CD4-positive, alpha-beta T cell (primary cell): ENCODE measurements at regions of chr9 and their contacts with region 1.

Region 1: DNA sequence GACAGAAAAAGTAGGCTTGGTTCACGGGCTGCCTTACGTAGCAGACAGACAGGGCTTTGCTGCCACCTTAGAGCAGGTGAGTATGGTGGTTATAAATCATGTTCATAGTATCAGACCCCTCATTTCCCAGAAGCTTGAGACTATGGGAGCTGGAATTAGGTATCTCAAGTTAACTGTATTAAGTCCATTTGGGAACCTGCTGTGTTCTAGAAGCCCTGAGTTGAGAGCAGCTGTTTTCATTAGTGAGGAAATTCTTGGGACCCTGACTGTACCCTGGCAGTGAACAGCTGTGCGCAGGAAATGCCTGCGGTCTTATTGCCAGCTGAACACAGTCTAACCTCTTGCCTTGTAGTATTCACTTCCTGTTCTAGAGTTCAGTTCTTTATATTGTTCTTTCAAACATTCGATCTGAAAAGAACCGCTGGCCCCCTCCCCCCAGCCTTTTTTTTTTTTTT is 29.8 kb downstream of the UGCG start:
- DNase-seq: peak; percentile 29 to 89 (median 52)
- ATAC-seq: peak; percentile 95
- H3K4me3 ChIP-seq: no peak overlapping the region
- H3K4me3 Mint-ChIP-seq: peak overlapping the region; percentile 82
- H3K27ac ChIP-seq: peak overlapping the region in 1 of 2 donors; percentile 46
- H3K27ac Mint-ChIP-seq: peak overlapping the region; percentile 87
- H3K4me1 ChIP-seq: peaks cover 27% of the 10 kb centered on the region
- H3K4me1 Mint-ChIP-seq: peaks cover 57% of the 10 kb centered on the region
- H3K27me3 ChIP-seq: no peaks in the 10 kb centered on the region
- H3K27me3 Mint-ChIP-seq: no peaks in the 10 kb centered on the region
- CTCF ChIP-seq: no peak

Region 2: DNA sequence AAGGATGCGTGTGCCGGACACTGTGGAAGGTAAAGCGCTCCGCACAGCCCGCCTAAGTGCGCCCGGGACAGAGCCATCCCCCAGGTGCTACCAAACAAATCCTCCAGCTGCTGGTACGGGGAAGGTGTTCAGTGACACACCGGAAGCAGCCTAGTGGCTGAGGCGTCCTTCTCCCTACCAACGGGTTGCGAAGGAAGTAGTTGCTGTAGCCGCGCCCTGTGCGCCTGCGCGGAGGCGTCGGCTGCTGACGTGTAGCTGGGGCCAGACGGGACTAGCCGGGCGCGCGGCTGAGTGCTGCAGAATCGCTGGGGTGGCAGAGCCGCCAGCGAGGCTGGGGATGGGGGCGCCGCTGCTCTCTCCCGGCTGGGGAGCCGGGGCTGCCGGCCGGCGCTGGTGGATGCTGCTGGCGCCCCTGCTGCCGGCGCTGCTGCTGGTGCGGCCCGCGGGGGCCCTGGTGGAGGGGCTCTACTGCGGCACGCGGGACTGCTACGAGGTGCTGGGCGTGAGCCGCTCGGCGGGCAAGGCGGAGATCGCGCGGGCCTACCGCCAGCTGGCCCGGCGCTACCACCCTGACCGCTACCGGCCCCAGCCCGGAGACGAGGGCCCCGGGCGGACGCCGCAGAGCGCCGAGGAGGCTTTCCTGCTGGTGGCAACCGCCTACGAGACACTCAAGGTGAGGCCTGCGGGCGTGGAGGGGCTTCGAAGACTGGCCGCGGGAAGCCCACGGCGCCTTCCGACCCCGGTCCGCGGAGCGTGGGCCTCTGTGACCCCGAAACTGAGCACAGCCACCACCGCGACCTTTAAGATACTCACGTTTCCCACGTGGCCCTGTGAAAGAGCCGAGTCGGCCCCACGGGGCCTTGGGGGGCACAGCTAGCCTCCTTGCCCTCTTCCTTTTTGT is 295.1 kb before region 1 on chr9 and contains the start of gene DNAJC25:
- CTCF ChIA-PET with region 1: no interaction called
- POLR2A ChIA-PET with region 1: interaction called, 3 read pairs
- intact Hi-C with region 1: loop called in 1 of 2 experiments (anchors 5 kb)
- DNase-seq: peak; percentile 91 to 100 (median 96)
- ATAC-seq: peak; percentile 92
- H3K4me3 ChIP-seq: peak within 1 kb of the TSS; percentile 74
- H3K4me3 Mint-ChIP-seq: peak within 1 kb of the TSS; percentile 99
- H3K27ac ChIP-seq: peak within 1 kb of the TSS; percentile 3 to 75
- H3K27ac Mint-ChIP-seq: peak within 1 kb of the TSS; percentile 90
- H3K4me1 ChIP-seq: peaks cover 18% of the 10 kb centered on the region
- H3K4me1 Mint-ChIP-seq: peaks cover 58% of the 10 kb centered on the region
- H3K27me3 ChIP-seq: no peaks in the 10 kb centered on the region
- H3K27me3 Mint-ChIP-seq: no peaks in the 10 kb centered on the region
- CTCF ChIP-seq: no peak
- total RNA-seq, gene DNAJC25: 4.5 to 4.8 TPM

Region 3: GRCh38 chr9:111916234-111916645 is 10.2 kb before region 1 on chr9:
- CTCF ChIA-PET with region 1: no interaction called
- POLR2A ChIA-PET with region 1: interaction called, 13 read pairs
- intact Hi-C with region 1: no loop called
- DNase-seq: peak in 1 of 14 experiments; percentile 27
- ATAC-seq: no peak
- H3K4me3 ChIP-seq: no peak overlapping the region
- H3K4me3 Mint-ChIP-seq: peak overlapping the region; percentile 25
- H3K27ac ChIP-seq: no peak overlapping the region
- H3K27ac Mint-ChIP-seq: peak overlapping the region; percentile 66
- H3K4me1 ChIP-seq: peaks cover 31% of the 10 kb centered on the region
- H3K4me1 Mint-ChIP-seq: peaks cover 63% of the 10 kb centered on the region
- H3K27me3 ChIP-seq: no peaks in the 10 kb centered on the region
- H3K27me3 Mint-ChIP-seq: no peaks in the 10 kb centered on the region
- CTCF ChIP-seq: no peak

Region 4: DNA sequence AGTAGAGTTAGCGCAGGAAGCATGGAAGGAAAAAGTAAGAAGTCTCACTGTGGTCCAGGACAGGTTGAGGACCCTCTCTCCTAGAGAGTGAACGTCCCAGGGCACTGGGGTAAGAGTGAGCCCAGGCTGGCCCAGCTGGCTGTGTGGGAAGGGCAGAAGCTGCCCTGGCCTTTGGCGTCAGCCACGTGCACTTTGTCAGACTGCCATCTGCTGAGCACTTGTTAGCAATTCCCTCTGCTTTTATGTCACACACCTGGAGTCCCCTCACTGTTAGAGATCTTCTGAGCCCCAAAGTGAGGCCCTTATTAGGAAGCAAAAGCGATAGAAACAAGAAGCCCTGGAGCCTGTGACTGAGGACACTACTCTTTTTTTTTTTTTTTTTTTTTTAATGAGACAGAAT is 49.3 kb after region 1 on chr9:
- CTCF ChIA-PET with region 1: no interaction called
- POLR2A ChIA-PET with region 1: interaction called, 3 read pairs
- intact Hi-C with region 1: loop called in 1 of 2 experiments (anchors 5 kb)
- DNase-seq: peak in 6 of 14 experiments; percentile 12 to 51 (median 37)
- ATAC-seq: no peak
- H3K4me3 ChIP-seq: no peak overlapping the region
- H3K4me3 Mint-ChIP-seq: no peak overlapping the region
- H3K27ac ChIP-seq: no peak overlapping the region
- H3K27ac Mint-ChIP-seq: no peak overlapping the region
- H3K4me1 ChIP-seq: peaks cover 5% of the 10 kb centered on the region
- H3K4me1 Mint-ChIP-seq: peaks cover 12% of the 10 kb centered on the region
- H3K27me3 ChIP-seq: no peaks in the 10 kb centered on the region
- H3K27me3 Mint-ChIP-seq: no peaks in the 10 kb centered on the region
- CTCF ChIP-seq: no peak

Region 5: GRCh38 chr9:112037281-112038016 is 111.0 kb after region 1 on chr9:
- CTCF ChIA-PET with region 1: no interaction called
- POLR2A ChIA-PET with region 1: interaction called, 4 read pairs
- intact Hi-C with region 1: loop called in 1 of 2 experiments (anchors 10 kb)
- DNase-seq: peak; percentile 37 to 93 (median 62)
- ATAC-seq: peak; percentile 98
- H3K4me3 ChIP-seq: peak overlapping the region; percentile 9
- H3K4me3 Mint-ChIP-seq: peak overlapping the region; percentile 82
- H3K27ac ChIP-seq: no peak overlapping the region
- H3K27ac Mint-ChIP-seq: peak overlapping the region; percentile 68
- H3K4me1 ChIP-seq: peaks cover 54% of the 10 kb centered on the region
- H3K4me1 Mint-ChIP-seq: peaks cover 67% of the 10 kb centered on the region
- H3K27me3 ChIP-seq: no peaks in the 10 kb centered on the region
- H3K27me3 Mint-ChIP-seq: peaks cover 4% of the 10 kb centered on the region
- CTCF ChIP-seq: no peak